ENCODE measurements at regions of chr6 and their contacts with region 1.

Region 1: DNA sequence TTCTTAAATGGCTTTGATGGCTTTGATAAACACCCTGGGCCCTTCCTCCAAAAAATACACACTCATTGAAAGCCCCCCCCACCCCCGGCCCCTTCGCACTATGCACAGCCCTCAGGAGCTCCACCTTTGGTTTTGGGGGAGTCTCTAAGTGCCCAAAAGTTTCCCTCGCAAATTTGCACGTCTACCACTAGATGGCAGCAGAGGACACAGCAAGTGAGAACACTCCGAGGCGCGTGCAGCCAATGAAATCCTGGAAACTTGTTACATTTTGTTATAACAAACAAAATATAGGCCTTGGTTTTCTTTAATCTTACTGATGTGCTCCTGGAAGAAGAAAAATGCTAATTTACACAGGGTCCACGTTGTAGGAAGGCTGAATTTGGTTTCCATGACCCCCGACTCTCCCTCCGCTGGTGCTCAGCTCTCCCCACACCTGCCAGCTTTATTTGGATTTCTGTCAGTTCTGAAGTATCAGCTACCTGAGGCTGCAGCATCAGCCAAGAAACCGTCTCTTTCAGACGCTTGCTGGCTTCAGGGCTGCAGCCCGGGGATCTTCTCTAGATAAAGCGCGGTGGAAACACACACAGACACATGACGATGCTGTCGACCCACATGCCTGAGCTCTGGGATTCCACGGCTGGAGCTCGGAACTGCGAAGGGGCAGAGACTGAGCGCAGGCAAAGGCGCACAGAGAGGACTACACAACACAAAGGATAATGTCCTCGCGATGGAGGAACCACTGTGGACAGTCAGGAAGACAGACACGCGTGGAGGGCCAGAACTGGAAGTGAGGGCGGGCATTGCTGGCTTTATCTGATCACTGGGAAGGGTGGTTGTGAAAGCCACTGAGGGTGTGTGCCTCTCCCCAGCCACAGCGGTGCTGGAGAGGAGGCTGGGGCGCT is 148.4 kb upstream of the RPS6KA2 start:
- DNase-seq: peak; percentile 88
- CTCF ChIP-seq: peak; percentile 88

Region 2: GRCh38 chr6:166456395-166457156 is 318.9 kb before region 1 on chr6:
- in situ Hi-C with region 1: no loop called
- DNase-seq: peak; percentile 51
- CTCF ChIP-seq: peak; percentile 36

Region 3: DNA sequence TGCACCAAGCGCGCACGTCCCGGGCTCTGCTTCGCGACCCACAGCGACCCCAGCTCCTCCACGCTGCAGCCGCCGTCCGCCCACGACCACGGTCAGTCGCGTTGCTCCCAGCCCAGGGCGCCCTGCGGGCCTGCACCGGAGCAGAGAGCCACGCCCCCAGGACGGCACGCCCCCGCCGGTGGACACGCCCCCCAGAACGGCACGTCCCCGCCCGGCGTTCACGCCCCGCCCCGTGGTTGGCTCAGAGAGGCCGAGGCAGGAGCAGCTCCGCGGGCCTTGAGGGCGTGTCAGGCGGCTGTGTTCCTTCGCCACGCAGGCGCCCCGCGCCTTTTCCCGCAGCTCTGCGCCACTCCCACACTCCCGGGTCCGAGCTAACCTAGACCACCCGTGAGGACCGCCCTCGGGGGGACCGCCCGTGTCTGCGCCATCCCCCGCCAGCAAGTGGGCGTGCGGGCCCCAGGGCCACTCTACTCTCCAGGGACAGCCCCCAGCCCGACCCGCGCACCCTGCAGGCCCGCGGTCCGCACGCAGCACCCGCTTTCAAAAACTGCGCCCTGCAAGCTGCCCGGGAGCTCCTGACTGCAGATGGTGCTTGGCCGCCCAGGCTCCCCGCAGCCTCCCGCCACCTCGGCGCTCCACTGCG is 181.1 kb after region 1 on chr6 and contains the start of gene RNASET2:
- in situ Hi-C with region 1: loop called (anchors 25 kb)
- DNase-seq: peak; percentile 94
- CTCF ChIP-seq: no peak

Region 4: GRCh38 chr6:167141667-167142432 is 366.4 kb after region 1 on chr6:
- in situ Hi-C with region 1: loop called (anchors 10 kb)
- DNase-seq: peak; percentile 80
- CTCF ChIP-seq: peak; percentile 96